H1 (cell line): ENCODE measurements at regions of chr5 and their contacts with region 1.

Region 1: DNA sequence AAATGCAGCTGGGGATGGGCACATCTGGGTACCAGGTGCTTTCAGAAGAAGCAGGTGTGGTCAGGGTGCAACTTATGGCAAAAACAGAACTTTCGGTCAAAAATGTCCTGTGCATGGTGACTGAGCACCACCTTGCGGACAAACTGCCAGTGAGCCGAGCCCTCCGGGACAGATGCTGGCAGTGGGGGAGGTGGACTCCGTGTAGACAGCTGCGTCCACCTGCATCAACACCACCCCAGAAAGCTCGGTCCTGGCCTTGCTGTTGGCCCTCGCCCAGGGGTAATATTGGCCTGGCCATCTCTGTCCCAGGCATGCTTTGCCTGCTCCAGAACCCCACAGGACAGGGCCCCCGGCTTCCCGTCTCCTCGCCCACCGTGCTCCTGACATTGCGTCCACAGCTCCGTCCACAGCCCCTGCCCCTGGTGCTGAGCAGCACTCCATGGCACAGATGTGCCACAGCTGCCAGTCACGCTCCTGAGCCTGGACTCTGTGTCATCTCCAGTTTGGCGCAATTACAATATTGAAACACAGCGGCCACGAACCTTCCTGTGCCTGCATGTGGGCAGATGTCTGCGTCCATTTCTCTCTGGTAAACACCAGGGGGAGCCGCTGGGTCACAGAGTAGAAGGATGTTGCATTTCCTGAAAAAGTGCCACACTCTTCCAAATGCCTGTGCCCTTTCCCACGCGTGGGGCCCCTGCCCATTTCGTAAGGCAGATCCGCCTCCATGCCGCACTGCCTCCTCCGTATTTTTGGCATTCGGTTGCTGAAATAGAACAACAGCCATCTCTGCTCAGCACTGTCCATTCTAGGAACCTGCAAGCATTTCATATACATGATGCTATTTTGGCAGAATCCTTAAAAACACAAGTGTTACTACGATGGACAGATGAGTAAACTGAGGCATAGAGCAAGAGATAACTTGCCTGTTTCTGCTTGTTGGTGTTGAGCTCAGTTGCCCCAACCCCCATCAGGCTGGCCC is 33.4 kb upstream of the SLC6A19 start:
- DNase-seq: peak in 1 of 2 experiments; percentile 82
- H3K4me3 ChIP-seq: peak overlapping the region in 2 of 4 experiments; percentile 15 to 46; a peak in 2 of 8 replicates
- H3K27ac ChIP-seq: no peak overlapping the region
- H3K4me1 ChIP-seq: peaks cover 0 to 5% (median 2%) of the 10 kb centered on the region in 4 experiments; a peak in 2 of 7 replicates
- H3K27me3 ChIP-seq: no peaks in the 10 kb centered on the region; a peak in 1 of 7 replicates
- CTCF ChIP-seq: peak in 2 of 3 experiments; percentile 92 to 94; a peak in 3 of 4 replicates
- EP300 ChIP-seq: no peak
- POLR2A ChIP-seq: no peak
- RAD21 ChIP-seq: peak; percentile 93 to 96

Region 2: GRCh38 chr5:997001-997474 is 171.0 kb before region 1 on chr5:
- CTCF ChIA-PET with region 1: interaction called, 13 read pairs
- POLR2A ChIA-PET with region 1: no interaction called
- DNase-seq: no peak
- H3K4me3 ChIP-seq: no peak overlapping the region
- H3K27ac ChIP-seq: no peak overlapping the region
- H3K4me1 ChIP-seq: peaks cover 0 to 3% (median 0%) of the 10 kb centered on the region in 4 experiments; a peak in 2 of 7 replicates
- H3K27me3 ChIP-seq: no peaks in the 10 kb centered on the region
- CTCF ChIP-seq: no peak
- EP300 ChIP-seq: no peak
- POLR2A ChIP-seq: no peak
- RAD21 ChIP-seq: no peak

Region 3: DNA sequence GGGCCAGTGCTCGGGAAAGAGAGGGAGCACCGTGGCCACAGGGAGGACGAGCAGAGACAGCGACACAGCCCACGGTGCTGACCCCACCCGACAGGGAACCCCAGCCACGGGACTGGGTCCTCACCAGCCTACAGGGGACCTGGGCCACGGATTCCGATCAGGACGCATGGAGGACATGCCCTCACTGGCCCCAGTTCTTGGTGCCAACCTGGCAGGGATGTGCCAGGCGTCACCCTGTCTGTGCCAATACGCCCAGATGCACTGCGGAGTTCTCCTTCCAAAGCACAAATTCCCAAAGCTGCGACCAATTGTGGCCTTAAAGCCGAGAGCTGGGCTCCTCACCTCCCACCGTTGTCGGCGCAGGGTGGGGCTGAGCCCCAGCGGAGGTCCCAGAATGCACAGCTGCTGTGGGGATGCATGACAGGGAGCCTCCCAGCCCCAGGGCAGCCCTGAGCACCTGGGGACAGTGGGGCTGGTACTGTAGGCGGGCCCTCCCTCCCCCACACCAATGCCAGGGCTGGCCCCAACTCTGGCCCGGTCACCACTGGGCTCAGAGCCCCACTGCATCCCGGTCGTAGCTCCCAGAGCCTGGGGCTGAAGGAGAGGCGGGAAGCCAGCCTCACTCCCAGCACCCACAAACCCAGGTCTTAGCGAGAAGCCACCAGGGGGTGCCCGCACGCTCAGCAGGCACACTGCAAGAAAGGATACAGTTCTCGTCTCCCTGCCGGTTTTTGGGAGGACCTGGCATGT is 115.2 kb before region 1 on chr5:
- CTCF ChIA-PET with region 1: interaction called, 10 read pairs
- POLR2A ChIA-PET with region 1: no interaction called
- DNase-seq: no peak
- H3K4me3 ChIP-seq: no peak overlapping the region
- H3K27ac ChIP-seq: no peak overlapping the region
- H3K4me1 ChIP-seq: no peaks in the 10 kb centered on the region; a peak in 1 of 7 replicates
- H3K27me3 ChIP-seq: no peaks in the 10 kb centered on the region
- CTCF ChIP-seq: no peak
- EP300 ChIP-seq: no peak
- POLR2A ChIP-seq: no peak
- RAD21 ChIP-seq: no peak

Region 4: DNA sequence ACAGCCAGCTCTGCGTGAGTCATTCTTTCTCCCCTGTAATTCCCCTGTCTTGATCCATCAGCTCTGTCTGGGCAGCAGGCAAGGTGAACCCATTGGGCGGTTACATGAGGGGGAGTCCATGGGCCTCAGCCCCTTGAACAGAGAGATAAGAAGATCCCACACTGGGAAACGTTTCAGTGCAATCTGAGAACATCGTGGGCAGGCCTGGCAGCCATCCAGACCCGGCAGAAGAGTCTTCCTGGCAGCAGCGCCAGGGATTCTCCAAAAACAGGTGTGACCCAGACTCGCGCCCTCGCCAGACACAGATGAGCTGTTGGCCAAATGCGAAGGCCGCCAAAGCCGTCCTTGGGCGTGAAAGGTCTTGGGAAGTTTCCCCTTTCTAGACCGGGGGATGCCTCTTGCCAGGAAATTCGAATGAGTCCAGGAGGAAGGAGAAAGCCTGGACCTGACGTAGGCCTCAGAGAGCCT is 49.8 kb before region 1 on chr5:
- CTCF ChIA-PET with region 1: interaction called, 17 read pairs
- POLR2A ChIA-PET with region 1: no interaction called
- DNase-seq: no peak
- H3K4me3 ChIP-seq: no peak overlapping the region
- H3K27ac ChIP-seq: no peak overlapping the region
- H3K4me1 ChIP-seq: peaks cover 0 to 8% (median 5%) of the 10 kb centered on the region in 4 experiments; a peak in 4 of 7 replicates
- H3K27me3 ChIP-seq: no peaks in the 10 kb centered on the region
- CTCF ChIP-seq: no peak
- EP300 ChIP-seq: no peak
- POLR2A ChIP-seq: no peak
- RAD21 ChIP-seq: no peak

Region 5: DNA sequence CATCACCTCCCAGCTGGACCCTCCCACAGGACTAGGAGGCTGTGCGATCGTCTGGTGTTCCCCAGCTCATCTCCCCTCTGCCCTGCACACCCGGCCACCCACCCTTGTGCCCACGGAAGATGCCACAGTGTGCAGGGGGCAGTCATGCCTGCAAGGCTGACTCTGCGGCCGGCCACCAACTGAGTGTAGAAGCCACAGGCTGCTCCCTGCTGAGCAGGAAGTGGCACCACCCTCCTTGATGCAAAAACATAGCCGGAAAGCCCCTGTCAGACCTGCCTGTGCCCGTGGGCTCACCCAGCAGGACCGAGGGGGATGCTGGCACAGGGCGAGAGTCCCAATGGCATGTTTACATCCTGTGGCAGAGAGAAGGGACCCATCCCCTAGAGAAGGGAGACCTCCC is 15.9 kb before region 1 on chr5:
- CTCF ChIA-PET with region 1: interaction called, 19 read pairs
- POLR2A ChIA-PET with region 1: interaction called, 4 read pairs
- DNase-seq: no peak
- H3K4me3 ChIP-seq: no peak overlapping the region
- H3K27ac ChIP-seq: no peak overlapping the region
- H3K4me1 ChIP-seq: peaks cover 0 to 3% (median under 1%) of the 10 kb centered on the region in 4 experiments; a peak in 2 of 7 replicates
- H3K27me3 ChIP-seq: peaks cover 13 to 35% (median 29%) of the 10 kb centered on the region in 4 experiments
- CTCF ChIP-seq: no peak
- EP300 ChIP-seq: no peak
- POLR2A ChIP-seq: no peak
- RAD21 ChIP-seq: no peak

Region 6: GRCh38 chr5:1315709-1316587 is 147.9 kb after region 1 on chr5:
- CTCF ChIA-PET with region 1: interaction called, 12 read pairs
- POLR2A ChIA-PET with region 1: no interaction called
- DNase-seq: no peak
- H3K4me3 ChIP-seq: peak overlapping the region in 1 of 4 experiments; percentile 32; a peak in 2 of 8 replicates
- H3K27ac ChIP-seq: no peak overlapping the region; the same call in 1 of the 2 replicates
- H3K4me1 ChIP-seq: peaks cover 11 to 17% (median 14%) of the 10 kb centered on the region in 4 experiments
- H3K27me3 ChIP-seq: no peaks in the 10 kb centered on the region
- CTCF ChIP-seq: no peak
- EP300 ChIP-seq: no peak
- POLR2A ChIP-seq: peak in 1 of 2 experiments; percentile 31; a peak in 1 of 3 replicates
- RAD21 ChIP-seq: no peak